Right cardiac atrium (tissue), 5 donors: ENCODE measurements at regions of chr6 and their contacts with region 1.

Region 1: GRCh38 chr6:26312501-26313390 is 52.3 kb upstream of the BTN3A2 start:
- DNase-seq: peak; percentile 62 to 83 (median 82)
- ATAC-seq: peak; percentile 91 to 92
- H3K4me3 ChIP-seq: peak overlapping the region; percentile 87
- H3K27ac ChIP-seq: peak overlapping the region; percentile 84
- H3K4me1 ChIP-seq: peaks cover 2% of the 10 kb centered on the region
- H3K27me3 ChIP-seq: no peaks in the 10 kb centered on the region

Region 2: DNA sequence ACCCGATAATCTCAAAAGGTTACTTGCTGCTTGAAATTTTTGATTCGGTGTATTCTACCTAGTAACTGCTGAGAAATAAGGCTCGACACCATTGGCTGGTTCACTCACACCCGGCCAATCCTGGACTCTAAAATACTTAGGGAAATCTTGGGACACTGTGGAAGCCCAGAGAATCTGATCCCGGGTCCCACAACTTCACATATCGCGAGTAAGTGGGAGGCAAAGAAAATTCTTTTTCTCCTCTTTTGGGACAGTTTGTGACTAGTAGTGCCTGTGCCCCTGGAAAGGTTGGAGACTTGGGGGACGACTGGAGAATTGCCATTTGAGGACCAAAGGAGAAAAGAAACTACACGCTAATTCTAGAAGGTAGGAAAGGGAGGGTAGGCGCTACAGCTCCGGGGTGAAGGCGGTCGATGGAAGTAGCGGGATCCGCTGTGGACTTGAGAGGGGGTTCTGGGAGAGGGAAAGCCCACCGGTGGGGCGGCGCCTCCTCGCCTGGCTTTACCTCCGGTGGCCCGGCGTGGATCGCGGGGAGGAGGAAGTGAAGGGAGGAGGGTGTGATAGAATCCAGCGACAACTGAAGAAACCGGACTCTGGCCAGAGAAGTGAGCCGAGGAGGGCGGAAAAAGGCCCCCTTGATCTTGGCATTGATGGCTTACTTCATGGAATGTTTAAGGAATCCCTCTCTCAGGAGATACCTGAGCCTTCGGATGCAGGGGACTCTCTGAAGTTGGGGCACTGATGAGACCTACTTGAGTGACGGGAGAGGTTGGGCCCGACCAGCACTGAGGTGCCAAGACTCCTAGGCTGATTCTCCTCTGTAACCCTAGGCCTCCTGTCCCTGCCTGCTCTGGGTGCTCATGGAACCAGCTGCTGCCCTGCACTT is 108.8 kb after region 1 on chr6:
- intact Hi-C with region 1: no loop called
- DNase-seq: peak; percentile 65 to 80 (median 78)
- ATAC-seq: peak; percentile 99
- H3K4me3 ChIP-seq: peak overlapping the region; percentile 64
- H3K27ac ChIP-seq: peak overlapping the region; percentile 62
- H3K4me1 ChIP-seq: peaks cover 10% of the 10 kb centered on the region
- H3K27me3 ChIP-seq: no peaks in the 10 kb centered on the region

Region 3: DNA sequence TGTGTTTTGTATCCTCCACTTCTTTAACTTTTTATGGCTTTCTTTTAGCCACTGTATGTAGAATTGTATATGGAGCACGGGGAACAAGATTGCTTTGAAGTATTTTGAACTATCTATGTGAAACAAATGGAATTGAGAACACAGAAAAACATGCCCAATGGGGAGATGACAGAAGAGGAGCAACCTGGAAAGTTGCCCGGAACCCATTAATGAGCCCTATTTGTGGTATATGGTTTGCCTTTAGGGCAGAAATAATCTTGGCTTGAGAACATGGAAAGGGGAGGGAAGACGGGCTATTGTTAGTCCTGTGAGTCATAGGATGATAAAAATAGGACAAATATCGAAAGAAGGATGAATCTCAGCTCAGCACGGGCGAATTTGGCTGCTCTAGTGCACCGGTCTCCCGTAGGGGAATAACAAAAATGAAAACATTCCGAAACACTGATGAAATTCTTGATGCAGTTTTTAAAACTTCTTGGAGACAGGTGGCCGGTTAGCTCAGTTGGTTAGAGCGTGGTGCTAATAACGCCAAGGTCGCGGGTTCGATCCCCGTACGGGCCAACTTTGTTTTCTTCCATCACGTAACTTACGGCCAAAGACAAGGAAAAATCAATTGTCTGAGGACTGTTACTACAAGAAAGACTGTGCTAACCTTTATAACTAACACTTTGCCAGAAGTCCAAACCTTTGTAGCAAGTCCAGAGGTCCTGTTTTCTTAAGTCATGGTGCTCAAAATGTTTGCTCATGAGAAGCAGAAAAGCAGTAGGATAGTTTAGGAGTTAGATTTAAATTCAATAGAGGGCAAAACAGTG is 241.1 kb after region 1 on chr6:
- intact Hi-C with region 1: loop called in 1 of 4 experiments (anchors 10 kb)
- DNase-seq: peak; percentile 75 to 90 (median 87)
- ATAC-seq: peak; percentile 88 to 90
- H3K4me3 ChIP-seq: peak overlapping the region; percentile 79
- H3K27ac ChIP-seq: peak overlapping the region; percentile 79
- H3K4me1 ChIP-seq: no peaks in the 10 kb centered on the region
- H3K27me3 ChIP-seq: no peaks in the 10 kb centered on the region